ENCODE measurements at regions of chr20 and their contacts with region 1.

Region 1: GRCh38 chr20:40506567-40506966 is 182.5 kb downstream of the MAFB start:
- DNase-seq: peak; percentile 95 to 99
- H3K4me3 ChIP-seq: no peak overlapping the region
- CTCF ChIP-seq: no peak
- POLR2A ChIP-seq: no peak

Region 2: DNA sequence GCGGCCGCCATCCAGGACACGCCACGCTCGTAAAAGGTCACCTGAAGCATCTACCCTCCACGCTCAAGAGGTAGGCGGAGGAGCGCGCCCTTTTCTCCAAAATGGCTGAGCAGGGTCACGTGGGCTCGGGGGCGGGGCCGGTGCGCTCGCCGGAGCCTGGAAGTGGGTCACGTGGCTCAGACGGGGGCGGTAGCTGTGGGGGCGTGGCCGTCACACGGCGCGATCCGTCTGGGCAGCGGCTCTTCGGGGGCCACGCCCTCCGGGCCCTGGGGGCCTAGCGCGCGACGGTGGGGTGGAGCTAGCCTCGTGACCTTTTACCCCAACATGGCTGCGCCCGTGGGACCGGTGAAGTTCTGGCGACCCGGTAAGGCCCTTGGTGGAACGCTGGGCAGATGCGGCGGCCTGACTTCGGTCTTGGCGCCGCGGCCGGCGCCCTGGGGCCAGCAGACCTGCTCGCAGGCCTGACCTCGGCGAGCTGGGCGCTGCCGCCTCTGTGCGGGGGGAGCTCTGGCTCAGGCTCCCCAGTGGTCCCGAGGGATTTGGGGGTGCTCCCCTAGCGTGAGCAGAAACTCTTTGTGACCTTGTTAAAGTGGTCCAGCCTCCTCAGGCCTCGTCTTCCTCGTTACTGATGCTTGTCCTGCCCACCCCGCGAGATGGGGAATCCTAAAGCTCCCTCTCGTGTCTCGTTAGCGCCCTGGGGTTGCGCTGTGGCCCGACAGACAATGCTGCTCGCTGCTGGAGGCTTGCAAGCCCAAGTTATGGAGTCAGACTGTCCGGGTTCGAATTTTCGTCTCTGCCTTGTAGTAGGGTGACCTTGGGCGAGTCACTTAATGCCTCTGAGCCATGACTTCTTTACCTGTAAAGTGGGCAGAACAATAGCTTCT is 1544.3 kb before region 1 on chr20 and contains the start of gene DHX35:
- intact Hi-C with region 1: no loop called
- DNase-seq: peak; percentile 97 to 100
- H3K4me3 ChIP-seq: peak within 1 kb of the TSS; percentile 71
- CTCF ChIP-seq: peak in 1 of 3 donors; percentile 9
- POLR2A ChIP-seq: no peak
- total RNA-seq, gene DHX35: 6.6 to 16.8 (median 11.0) TPM

Region 3: DNA sequence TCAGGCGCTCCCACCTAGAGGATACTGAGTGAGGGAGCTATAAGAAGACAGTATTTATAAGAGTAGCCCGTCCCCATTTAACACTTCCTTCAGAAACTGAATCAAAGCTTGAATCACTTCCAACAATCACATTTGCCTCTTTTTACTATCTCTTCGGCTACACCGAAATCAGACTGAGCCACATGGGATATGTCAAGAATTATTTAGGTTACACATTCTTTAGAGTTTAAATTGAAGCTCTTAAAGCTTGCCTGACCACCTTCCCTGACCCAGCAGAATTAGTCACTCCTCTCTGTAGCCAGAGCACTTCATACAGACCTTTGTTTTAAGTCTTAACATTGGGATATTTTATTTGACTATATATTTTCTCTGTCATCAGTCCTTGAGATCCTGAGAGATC is 18.8 kb after region 1 on chr20:
- intact Hi-C with region 1: loop called (anchors 1 kb)
- DNase-seq: no peak
- H3K4me3 ChIP-seq: no peak overlapping the region
- CTCF ChIP-seq: no peak
- POLR2A ChIP-seq: no peak

Measured in lower leg skin (tissue), 4 donors.